ENCODE measurements at regions of chr3 and their contacts with region 1.

Region 1: DNA sequence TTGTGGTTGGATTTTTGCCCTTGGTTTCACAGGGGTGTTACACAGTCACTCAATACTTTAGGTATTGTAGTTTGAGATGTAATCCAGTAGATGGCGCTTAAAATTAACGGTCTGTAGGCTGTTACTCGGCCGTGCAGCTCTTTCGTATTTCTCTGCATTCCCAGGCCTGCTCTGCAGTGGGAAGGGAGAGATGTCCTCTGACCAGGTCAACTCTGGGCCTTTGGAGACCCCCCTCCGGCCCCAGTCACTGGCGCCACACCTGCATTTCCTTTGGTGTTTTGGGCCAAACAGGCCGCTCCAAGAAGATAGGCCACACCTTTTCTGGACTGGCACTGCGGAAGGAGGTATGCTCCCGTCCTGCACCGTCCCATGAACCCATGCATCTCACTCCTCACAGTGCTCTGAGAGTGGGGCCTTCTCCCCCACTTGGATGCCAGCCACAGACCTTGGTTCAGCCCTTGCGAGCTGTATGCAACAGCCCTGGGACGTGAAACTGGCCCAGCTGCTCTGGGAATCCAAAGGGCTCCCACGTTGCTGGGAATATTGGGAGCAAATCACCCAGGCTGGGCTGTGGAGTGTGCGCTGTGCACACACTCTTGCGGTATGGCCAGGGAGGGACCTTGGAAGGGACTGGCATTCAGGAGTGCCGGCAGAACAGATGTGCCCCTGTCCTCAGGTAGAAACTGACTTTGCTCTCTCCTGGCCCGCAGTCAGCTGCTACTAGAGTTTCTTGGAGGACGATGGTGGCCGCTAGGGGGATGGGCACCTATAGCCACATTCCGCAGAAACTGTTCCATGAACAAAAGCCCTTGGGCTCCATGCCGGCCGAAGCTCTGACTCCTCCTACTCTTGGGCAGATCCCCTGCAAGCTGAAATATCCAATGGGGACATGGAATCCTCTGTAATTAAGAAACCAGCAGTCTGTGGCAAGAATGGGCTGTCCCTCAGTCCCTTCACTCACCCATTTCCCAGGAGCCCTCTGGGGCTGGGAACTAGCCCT is 410.5 kb upstream of the CADM2 start:
- DNase-seq: no peak
- ATAC-seq: peak; percentile 76 to 86

Region 2: GRCh38 chr3:84772841-84773240 is 224.6 kb after region 1 on chr3:
- intact Hi-C with region 1: loop called in 1 of 2 experiments (anchors 5 kb)
- DNase-seq: no peak
- ATAC-seq: no peak

Region 3: GRCh38 chr3:84959470-84960271 is 411.4 kb after region 1 on chr3:
- intact Hi-C with region 1: loop called in 1 of 2 experiments (anchors 5 kb)
- DNase-seq: no peak
- ATAC-seq: peak; percentile 5 to 10

Region 4: DNA sequence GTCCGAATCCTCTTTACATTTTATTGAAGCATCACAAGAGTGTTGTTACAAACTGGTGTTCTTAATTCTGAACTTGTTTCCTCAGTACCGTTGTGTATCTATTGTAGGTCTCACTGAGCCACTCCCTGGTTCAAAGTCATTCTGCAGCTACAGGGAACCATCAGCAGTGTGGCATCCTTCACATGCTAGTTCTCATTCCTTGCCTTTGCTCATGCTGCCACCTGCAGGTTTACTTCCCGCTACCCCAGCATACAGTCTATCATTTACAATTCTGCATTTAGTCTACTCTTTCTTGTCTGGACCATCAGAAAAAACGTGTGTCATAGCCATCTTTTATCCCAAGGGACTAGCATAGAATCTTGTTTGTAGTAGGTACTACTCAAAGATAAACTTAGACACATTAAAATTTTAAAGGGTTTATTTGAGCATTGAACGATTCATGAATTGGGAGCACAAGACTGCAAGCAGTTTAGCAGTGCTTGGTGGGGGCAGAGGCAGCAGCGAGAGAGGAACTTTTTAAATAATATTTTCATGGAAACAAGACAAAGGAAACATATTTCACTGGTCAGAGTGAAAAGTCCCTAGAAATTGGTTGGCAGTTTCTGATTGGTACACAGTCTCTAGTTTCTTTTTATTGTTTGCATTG is 812.6 kb after region 1 on chr3:
- intact Hi-C with region 1: loop called in 1 of 2 experiments (anchors 5 kb)
- DNase-seq: peak; percentile 29
- ATAC-seq: peak; percentile 74 to 75

Region 5: DNA sequence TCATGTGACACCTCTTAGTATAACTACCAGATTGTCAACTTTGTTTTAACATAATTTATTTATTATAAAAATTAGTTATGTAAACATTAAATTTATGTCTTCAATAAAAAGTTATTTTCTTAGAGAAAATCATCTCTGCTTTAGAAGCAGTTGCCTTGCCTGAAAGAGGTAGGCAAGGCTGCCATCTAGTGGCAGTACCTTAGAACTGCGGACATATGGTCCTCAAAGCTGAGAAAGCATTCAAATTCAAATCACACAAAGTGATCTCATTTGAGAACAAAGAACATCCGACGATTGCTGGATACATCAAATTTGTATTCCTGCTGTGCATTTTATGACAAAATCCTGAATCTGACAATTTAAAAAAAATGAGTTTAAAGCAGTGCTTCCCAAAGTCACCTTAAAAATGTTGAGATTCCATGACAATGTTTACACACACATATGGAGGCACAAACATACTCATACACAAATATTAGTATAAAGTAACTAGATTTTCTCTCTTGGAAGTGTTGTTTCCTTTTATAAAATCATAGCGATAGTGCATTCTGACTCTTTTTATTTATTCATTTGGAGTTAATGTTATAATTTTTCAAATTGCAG is 1027.9 kb after region 1 on chr3:
- intact Hi-C with region 1: loop called in 1 of 2 experiments (anchors 2 kb)
- DNase-seq: peak; percentile 44
- ATAC-seq: no peak